AG04450 (cell line): ENCODE measurements at regions of chr5 and their contacts with region 1.

Region 1: GRCh38 chr5:41843456-41844370 is 26.5 kb downstream of the OXCT1 start:
- DNase-seq: peak; percentile 48
- H3K4me3 ChIP-seq: no peak overlapping the region
- H3K27ac ChIP-seq: no peak overlapping the region
- H3K27me3 ChIP-seq: no peaks in the 10 kb centered on the region
- CTCF ChIP-seq: peak; percentile 90

Region 2: GRCh38 chr5:41695920-41696582 is 147.7 kb before region 1 on chr5:
- CTCF ChIA-PET with region 1: interaction called, 16 read pairs
- POLR2A ChIA-PET with region 1: no interaction called
- DNase-seq: no peak
- H3K4me3 ChIP-seq: no peak overlapping the region
- H3K27ac ChIP-seq: no peak overlapping the region
- H3K27me3 ChIP-seq: peaks cover 14% of the 10 kb centered on the region
- CTCF ChIP-seq: peak; percentile 34; the same call in 1 of the 2 replicates

Region 3: DNA sequence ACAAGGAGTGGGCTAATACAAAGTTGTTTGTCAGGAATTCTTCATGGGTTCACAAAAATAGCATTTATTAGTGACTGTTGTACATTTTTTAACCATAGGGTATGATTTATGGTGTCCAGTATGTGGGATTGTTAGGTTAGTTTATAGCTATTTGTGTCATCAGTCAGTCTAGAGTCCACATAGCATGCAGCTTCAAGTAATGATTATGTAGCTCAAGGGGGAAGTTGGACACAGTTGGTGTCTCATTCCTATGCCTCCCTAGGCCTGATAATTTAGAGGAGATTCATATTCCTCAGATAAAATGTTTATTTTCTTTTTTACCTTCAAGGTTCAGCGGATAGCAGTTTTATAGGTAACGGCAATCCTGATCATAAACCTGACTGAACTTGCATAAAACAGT is 127.3 kb before region 1 on chr5:
- CTCF ChIA-PET with region 1: interaction called, 16 read pairs
- POLR2A ChIA-PET with region 1: no interaction called
- DNase-seq: no peak
- H3K4me3 ChIP-seq: no peak overlapping the region
- H3K27ac ChIP-seq: no peak overlapping the region
- H3K27me3 ChIP-seq: no peaks in the 10 kb centered on the region
- CTCF ChIP-seq: no peak

Region 4: DNA sequence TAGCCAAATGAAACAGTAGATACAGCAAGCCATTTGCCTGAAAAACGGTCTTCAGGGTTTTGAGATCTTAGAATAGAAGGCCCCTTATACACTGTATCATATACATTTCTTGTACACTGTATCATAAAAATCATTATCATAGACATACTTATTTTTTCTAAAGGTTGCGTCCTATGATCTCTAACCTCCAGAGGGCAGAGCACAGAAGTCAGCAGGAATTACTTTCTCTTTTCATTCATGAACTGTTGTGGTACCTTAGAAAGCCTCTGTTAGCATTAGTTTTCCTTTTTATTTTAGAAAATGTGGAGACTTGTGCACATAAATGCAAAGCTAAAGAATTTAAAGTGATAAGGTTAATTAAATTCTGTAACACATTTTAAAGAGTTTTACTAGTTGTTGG is 88.9 kb before region 1 on chr5:
- CTCF ChIA-PET with region 1: interaction called, 25 read pairs
- POLR2A ChIA-PET with region 1: no interaction called
- DNase-seq: no peak
- H3K4me3 ChIP-seq: no peak overlapping the region
- H3K27ac ChIP-seq: no peak overlapping the region
- H3K27me3 ChIP-seq: no peaks in the 10 kb centered on the region
- CTCF ChIP-seq: no peak

Region 5: GRCh38 chr5:41856644-41857491 is 13.2 kb after region 1 on chr5:
- CTCF ChIA-PET with region 1: interaction called, 38 read pairs
- POLR2A ChIA-PET with region 1: no interaction called
- DNase-seq: peak; percentile 45
- H3K4me3 ChIP-seq: no peak overlapping the region
- H3K27ac ChIP-seq: no peak overlapping the region
- H3K27me3 ChIP-seq: no peaks in the 10 kb centered on the region
- CTCF ChIP-seq: peak; percentile 82

Region 6: DNA sequence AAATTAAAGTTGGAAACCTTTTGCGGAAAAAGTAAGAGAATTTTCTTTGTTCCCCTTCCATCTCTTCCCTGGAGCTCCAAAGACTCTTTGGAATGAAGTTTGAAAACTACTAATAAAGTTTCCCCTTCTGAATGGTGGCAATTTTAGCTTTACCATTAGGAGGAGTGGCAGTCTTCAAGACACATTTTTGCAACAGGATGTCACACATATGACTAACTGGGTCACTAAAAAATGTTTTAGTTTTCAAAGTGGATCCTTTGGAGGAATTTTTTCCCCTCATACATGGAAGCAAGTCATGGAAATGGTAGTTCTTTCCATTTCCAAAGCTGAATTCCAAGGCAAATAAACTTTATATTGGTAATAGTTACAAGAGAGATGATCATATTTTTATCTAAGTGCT is 96.9 kb after region 1 on chr5:
- CTCF ChIA-PET with region 1: no interaction called
- POLR2A ChIA-PET with region 1: no interaction called
- DNase-seq: no peak
- H3K4me3 ChIP-seq: no peak overlapping the region
- H3K27ac ChIP-seq: no peak overlapping the region
- H3K27me3 ChIP-seq: no peaks in the 10 kb centered on the region
- CTCF ChIP-seq: no peak